Common myeloid progenitor, CD34-positive (primary cell): ENCODE measurements at regions of chr10 and their contacts with region 1.

Region 1: GRCh38 chr10:97676770-97677581 is 10.1 kb downstream of the AVPI1 start:
- DNase-seq: peak; percentile 63 to 80 (median 75)
- H3K4me3 ChIP-seq: no peak overlapping the region
- H3K27ac ChIP-seq: no peak overlapping the region
- H3K4me1 ChIP-seq: no peaks in the 10 kb centered on the region
- H3K27me3 ChIP-seq: no peaks in the 10 kb centered on the region

Region 2: DNA sequence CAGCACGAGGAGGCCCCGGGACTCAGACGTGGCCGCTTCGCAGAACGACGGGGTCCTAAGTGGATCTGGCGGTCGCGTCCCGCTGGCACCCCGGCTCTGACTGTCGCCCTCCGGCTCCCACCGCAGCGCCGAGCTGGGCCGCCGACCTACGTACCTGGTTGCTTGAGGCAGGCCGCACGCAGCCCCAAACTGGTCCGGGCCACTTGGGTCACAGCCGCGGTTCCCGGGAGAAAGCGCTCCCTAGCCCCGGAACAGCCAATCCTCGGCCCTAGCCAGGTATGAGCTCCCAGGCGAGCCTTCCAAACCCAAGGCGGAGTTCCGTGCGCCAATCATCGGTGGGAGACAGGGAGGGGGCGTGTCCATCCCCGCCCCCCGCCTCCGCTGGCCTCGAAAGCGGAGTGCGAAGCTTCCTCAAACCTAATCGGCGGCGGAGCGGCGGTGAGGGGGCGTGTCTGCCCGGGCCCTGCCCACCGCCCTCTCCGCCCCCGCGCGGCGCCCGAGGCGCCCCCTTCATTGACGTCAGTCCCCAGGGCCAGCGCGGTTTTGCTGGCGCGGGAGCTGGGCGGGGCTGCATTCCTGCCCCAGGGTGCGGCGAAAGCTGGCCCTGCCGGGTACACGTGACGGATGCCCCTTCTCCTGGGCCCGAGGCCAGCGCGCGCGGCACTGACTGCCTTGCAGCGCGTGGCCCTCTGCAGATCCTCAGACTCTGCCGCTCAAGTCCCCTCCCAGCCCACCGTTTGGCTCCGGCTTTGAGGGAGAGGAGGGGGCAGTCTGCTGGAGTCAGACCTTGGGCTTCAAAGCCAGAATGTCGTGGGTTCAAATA is 10.2 kb after region 1 on chr10 and contains the start of gene AVPI1:
- CTCF ChIA-PET with region 1: interaction called, 54 read pairs
- POLR2A ChIA-PET with region 1: no interaction called
- DNase-seq: peak; percentile 96 to 98 (median 98)
- H3K4me3 ChIP-seq: peak within 1 kb of the TSS; percentile 51 to 86 (median 74)
- H3K27ac ChIP-seq: peak within 1 kb of the TSS; percentile 40 to 72
- H3K4me1 ChIP-seq: peaks cover 0 to 33% (median 23%) of the 10 kb centered on the region in 4 experiments
- H3K27me3 ChIP-seq: no peaks in the 10 kb centered on the region

Region 3: DNA sequence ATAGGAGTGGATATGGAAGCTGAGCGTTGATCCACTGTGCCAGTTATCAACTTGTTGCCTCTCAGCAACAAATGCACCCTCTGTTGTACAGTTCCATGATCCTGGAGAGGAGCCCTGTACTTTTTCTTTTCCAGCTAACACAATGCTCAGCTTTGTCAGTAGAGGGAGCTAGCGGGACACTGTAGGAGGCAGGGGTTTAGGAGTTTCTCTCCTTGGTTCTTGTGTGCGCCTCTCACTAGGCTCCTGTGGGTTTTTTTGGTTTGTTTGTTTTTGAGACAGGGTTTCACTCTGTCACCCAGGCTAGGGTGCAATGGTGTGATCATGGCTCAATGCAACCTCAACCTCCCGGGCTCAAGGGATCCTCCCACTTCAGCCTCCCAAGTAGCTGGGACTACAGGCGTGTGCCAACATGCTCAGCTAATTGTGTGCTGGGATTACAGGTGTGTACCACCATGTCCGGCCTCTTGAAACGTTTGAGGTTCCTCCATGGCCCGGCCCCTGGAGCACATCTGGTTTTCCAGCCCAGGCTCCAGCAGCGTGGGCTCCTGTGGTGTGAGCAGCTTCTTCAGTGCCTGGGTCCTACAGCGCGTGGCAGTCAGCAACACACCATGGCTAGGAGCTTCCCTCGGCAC is 24.6 kb after region 1 on chr10:
- CTCF ChIA-PET with region 1: interaction called, 49 read pairs
- POLR2A ChIA-PET with region 1: interaction called, 3 read pairs
- DNase-seq: peak; percentile 68 to 82 (median 74)
- H3K4me3 ChIP-seq: no peak overlapping the region
- H3K27ac ChIP-seq: no peak overlapping the region
- H3K4me1 ChIP-seq: no peaks in the 10 kb centered on the region
- H3K27me3 ChIP-seq: peaks cover 0 to 4% (median 0%) of the 10 kb centered on the region in 5 experiments

Region 4: DNA sequence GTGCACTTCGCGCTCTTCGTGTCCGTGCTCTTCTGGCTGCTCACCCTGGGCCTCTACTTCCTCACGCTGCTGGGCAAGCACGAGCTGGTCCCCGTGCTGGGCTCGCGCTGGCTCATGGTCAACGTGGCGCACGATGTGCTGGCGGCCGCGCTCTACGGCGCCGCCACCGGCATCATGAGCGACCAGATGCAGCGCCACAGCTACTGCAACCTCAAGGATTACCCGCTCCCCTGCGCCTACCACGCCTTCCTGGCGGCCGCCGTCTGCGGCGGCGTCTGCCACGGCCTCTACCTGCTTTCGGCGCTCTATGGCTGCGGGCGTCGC is 37.0 kb after region 1 on chr10:
- CTCF ChIA-PET with region 1: interaction called, 22 read pairs
- POLR2A ChIA-PET with region 1: no interaction called
- DNase-seq: peak; percentile 60 to 83 (median 69)
- H3K4me3 ChIP-seq: peak overlapping the region; percentile 34 to 80 (median 64)
- H3K27ac ChIP-seq: peak overlapping the region in 1 of 2 experiments; percentile 64
- H3K4me1 ChIP-seq: peaks cover 0 to 38% (median 30%) of the 10 kb centered on the region in 4 experiments
- H3K27me3 ChIP-seq: no peaks in the 10 kb centered on the region

Region 5: GRCh38 chr10:97724341-97724941 is 47.5 kb after region 1 on chr10:
- CTCF ChIA-PET with region 1: interaction called, 58 read pairs
- POLR2A ChIA-PET with region 1: no interaction called
- DNase-seq: no peak
- H3K4me3 ChIP-seq: no peak overlapping the region
- H3K27ac ChIP-seq: no peak overlapping the region
- H3K4me1 ChIP-seq: no peaks in the 10 kb centered on the region
- H3K27me3 ChIP-seq: no peaks in the 10 kb centered on the region

Region 6: GRCh38 chr10:97731346-97732051 is 54.5 kb after region 1 on chr10:
- CTCF ChIA-PET with region 1: interaction called, 58 read pairs
- POLR2A ChIA-PET with region 1: no interaction called
- DNase-seq: peak; percentile 59 to 78 (median 62)
- H3K4me3 ChIP-seq: no peak overlapping the region
- H3K27ac ChIP-seq: no peak overlapping the region
- H3K4me1 ChIP-seq: peaks cover 0 to under 1% (median 0%) of the 10 kb centered on the region in 4 experiments
- H3K27me3 ChIP-seq: no peaks in the 10 kb centered on the region

Region 7: DNA sequence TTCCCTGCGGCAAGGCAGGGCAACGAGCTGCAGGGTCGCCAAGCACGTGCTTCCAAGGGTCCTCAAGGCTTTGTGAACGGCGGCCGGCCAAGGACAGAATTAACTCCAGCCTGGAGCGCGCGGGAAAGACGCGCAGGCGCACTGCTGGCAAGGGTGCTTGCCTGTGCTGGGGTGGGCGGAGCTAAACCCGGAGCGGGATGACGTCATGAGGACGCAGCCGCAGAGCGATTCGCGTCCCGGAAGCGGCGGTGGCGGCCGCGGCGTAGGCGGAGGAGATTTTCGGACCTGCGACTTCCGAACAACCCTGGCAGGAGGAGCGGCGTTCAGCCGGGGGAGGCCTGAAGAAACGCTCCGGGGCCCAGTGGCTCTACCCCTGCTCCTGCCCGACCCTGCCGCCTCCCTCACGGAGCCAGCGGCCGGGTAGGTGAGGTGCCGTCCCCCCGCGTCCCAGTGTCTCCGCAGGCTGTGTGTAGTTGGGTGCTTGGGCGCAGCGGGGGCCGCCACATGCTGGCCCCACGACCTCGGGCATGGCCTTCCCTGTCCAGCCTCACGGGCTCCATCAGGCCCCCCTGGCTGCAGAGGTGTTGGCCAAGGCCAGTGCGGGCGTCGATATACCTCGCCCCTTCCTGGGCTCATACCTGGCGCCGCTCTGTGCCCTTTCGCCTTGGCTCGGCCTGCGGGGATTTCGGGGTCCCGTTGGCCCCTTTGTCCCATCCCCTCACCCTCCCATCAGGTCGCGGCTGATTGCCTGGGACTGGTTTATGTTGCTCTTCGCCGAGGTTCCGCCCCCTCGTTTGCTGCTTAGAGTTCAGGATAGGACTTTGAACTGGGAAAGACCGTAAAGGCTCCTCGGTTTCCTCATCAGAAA is 60.2 kb after region 1 on chr10 and contains the start of gene ZFYVE27:
- CTCF ChIA-PET with region 1: interaction called, 58 read pairs
- POLR2A ChIA-PET with region 1: no interaction called
- DNase-seq: peak; percentile 93 to 94 (median 94)
- H3K4me3 ChIP-seq: peak within 1 kb of the TSS; percentile 57 to 96 (median 89)
- H3K27ac ChIP-seq: peak within 1 kb of the TSS; percentile 70 to 91
- H3K4me1 ChIP-seq: peaks cover 7 to 19% (median 15%) of the 10 kb centered on the region in 4 experiments
- H3K27me3 ChIP-seq: no peaks in the 10 kb centered on the region